SK-N-SH (cell line): ENCODE measurements at regions of chr3 and their contacts with region 1.

Region 1: DNA sequence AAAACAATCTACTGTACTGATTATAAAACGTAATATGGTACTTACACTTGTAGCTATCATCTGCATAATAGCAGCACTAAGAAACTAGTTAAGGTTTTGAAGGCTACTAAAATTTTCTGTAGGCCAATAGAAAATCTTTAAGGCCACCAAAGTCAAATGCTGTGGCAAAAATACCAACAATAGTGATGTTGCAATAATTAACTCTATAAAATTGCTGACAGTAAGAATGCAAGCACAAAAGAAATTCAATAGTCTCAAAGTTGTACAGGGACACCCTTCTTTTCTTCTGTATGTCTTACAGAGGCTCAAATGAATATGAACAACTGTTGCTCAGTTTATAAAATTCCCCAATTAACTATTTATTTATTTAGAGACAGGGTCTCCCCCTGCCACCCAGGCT is 62.0 kb downstream of the TMCC1 start:
- DNase-seq: no peak
- H3K4me3 ChIP-seq: no peak overlapping the region
- H3K27ac ChIP-seq: no peak overlapping the region
- H3K4me1 ChIP-seq: peaks cover 0 to 6% of the 10 kb centered on the region in 2 experiments; a peak in 3 of 4 replicates
- H3K27me3 ChIP-seq: no peaks in the 10 kb centered on the region
- CTCF ChIP-seq: no peak
- EP300 ChIP-seq: no peak
- RAD21 ChIP-seq: no peak

Region 2: DNA sequence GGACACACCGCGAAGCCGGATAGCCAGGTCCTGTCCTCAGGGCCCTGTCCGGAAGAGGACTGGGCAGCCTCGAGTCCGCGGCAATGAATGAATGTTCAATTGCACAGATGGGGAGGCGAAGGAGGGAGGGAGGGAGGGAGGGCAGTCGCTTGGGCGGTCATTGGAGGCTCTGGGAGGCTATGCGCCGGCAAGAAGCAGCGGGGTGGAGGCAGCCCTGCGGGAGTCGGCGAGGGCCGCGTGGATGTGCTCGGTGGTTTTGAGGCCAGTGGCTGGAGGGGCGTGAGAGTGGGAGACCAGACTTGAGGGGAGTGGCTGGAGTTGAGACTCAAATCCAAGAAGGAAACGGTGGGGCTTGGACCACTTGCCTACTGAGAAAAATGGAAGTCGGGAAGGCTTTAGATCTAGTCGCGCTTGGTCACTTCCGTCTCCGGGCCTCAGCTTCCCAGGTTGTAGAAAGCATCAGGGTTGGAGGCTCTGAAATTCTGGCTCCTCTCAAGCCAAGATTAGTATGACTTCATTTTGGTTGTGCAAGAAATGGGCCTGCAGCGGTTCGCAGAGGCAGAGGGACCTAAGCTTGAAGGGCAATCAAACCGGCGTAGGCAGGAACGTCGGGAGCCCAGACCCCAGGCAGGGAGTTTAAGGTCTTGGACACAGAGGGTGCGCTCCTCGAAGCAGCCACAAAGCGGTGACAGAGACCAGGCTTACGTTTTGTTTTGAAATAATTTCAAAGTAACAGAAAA is 203.9 kb before region 1 on chr3:
- CTCF ChIA-PET with region 1: interaction called, 10 read pairs
- POLR2A ChIA-PET with region 1: no interaction called
- DNase-seq: peak; percentile 77
- H3K4me3 ChIP-seq: no peak overlapping the region; a peak in 1 of 4 replicates
- H3K27ac ChIP-seq: no peak overlapping the region
- H3K4me1 ChIP-seq: no peaks in the 10 kb centered on the region; a peak in 1 of 4 replicates
- H3K27me3 ChIP-seq: no peaks in the 10 kb centered on the region
- CTCF ChIP-seq: peak; percentile 67
- EP300 ChIP-seq: no peak
- RAD21 ChIP-seq: peak; percentile 83

Region 3: DNA sequence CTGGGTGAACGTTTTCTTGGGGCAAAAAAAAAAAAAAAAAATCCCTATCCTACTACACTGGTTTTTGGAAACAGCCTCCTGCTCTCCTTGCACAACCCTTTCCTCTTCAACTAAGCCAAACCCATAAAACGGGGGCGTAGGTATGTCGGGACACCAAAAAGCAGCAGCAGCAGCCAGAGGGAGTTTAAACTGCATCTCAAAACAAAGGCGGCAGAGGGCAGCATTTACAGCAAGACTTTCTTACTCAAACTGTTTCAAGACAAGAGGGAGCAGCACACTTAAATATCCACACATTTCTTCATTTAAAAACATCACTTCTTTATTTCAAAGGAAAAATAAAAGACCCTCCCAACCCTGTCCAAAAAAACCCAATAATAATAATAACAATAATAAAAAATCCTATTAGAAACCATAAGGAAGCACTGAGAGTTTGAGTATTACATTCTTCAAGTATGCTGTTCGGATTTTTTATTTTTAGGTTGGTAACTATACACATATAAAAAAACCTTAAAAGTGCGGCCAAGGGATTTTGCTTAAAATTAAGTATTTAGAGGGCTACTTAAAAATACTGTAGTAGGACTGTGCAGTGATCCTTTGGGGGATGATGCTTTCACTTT is 181.1 kb before region 1 on chr3:
- CTCF ChIA-PET with region 1: interaction called, 43 read pairs
- POLR2A ChIA-PET with region 1: no interaction called
- DNase-seq: peak; percentile 58
- H3K4me3 ChIP-seq: peak overlapping the region in 1 of 2 experiments; percentile 27; a peak in 1 of 4 replicates
- H3K27ac ChIP-seq: peak overlapping the region; percentile 28 to 52; a peak in 2 of 4 replicates
- H3K4me1 ChIP-seq: peaks cover 8 to 24% of the 10 kb centered on the region in 2 experiments
- H3K27me3 ChIP-seq: no peaks in the 10 kb centered on the region
- CTCF ChIP-seq: peak; percentile 76
- EP300 ChIP-seq: no peak
- RAD21 ChIP-seq: peak; percentile 91

Region 4: GRCh38 chr3:129934234-129935123 is 103.0 kb after region 1 on chr3:
- CTCF ChIA-PET with region 1: interaction called, 10 read pairs
- POLR2A ChIA-PET with region 1: no interaction called
- DNase-seq: peak; percentile 77
- H3K4me3 ChIP-seq: peak overlapping the region in 1 of 2 experiments; percentile 37; a peak in 1 of 4 replicates
- H3K27ac ChIP-seq: no peak overlapping the region
- H3K4me1 ChIP-seq: no peaks in the 10 kb centered on the region; a peak in 1 of 4 replicates
- H3K27me3 ChIP-seq: no peaks in the 10 kb centered on the region
- CTCF ChIP-seq: peak; percentile 95
- EP300 ChIP-seq: no peak
- RAD21 ChIP-seq: peak; percentile 88